Mammary epithelial cell (primary cell): ENCODE measurements at regions of chr12 and their contacts with region 1.

Region 1: GRCh38 chr12:111932241-111932640 is 80.7 kb downstream of the TMEM116 start:
- DNase-seq: no peak
- H3K4me3 ChIP-seq: no peak overlapping the region
- H3K27ac ChIP-seq: no peak overlapping the region
- H3K4me1 ChIP-seq: no peaks in the 10 kb centered on the region
- H3K27me3 ChIP-seq: no peaks in the 10 kb centered on the region
- CTCF ChIP-seq: no peak

Region 2: DNA sequence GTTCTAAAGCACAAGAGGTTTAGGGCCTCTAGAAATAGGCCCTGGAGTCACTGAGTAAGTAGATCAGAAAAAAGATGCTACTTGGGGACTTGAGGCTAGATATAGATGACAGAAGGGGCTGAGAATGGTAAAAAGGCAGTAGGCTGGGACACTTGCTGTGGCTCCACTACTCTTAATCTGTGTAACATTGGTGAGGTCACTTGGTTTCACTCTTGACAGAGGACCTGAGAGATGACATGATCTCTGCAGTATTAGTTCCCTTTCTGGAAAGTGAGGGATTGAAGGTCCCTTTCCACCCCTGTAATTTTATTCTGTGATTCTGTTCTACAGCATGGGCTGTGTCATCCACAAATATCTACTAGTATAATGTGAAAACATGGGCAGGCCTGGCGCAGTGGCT is 50.5 kb before region 1 on chr12:
- CTCF ChIA-PET with region 1: no interaction called
- dilution Hi-C with region 1: loop called (anchors 5 kb)
- in situ Hi-C with region 1: no loop called
- intact Hi-C with region 1: no loop called
- DNase-seq: no peak
- H3K4me3 ChIP-seq: no peak overlapping the region
- H3K27ac ChIP-seq: no peak overlapping the region
- H3K4me1 ChIP-seq: no peaks in the 10 kb centered on the region
- H3K27me3 ChIP-seq: no peaks in the 10 kb centered on the region
- CTCF ChIP-seq: no peak

Region 3: DNA sequence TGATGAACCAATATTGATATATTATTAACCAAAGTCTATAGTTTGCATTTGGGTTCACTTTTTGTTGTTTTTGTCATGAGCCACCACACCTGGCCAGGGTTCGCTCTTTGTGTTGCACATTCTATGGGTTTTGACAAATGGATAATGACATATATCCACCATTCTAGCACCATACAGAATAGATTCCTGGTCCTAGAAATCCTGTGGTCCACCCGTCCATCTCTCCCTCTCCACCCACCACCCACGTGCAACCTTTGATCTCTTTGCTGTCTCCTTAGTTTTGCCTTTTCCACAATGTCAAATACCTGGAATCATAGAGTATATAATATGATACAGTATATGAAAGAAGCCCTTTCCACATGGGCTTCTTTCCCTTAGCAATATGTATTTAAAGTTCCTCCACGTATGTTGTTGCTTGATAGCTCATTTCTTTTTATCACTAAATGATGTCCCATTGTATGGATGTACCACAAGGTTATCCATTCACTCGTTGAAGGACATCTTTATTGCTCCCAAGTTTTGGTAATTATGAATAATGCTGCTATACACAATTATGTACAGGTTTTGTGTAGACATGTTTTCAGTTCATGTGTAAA is 469.8 kb after region 1 on chr12:
- CTCF ChIA-PET with region 1: no interaction called
- dilution Hi-C with region 1: loop called (anchors 5 kb)
- in situ Hi-C with region 1: no loop called
- intact Hi-C with region 1: no loop called
- DNase-seq: no peak
- H3K4me3 ChIP-seq: no peak overlapping the region
- H3K27ac ChIP-seq: no peak overlapping the region
- H3K4me1 ChIP-seq: peaks cover 6% of the 10 kb centered on the region
- H3K27me3 ChIP-seq: no peaks in the 10 kb centered on the region
- CTCF ChIP-seq: no peak